CD4-positive, alpha-beta memory T cell (primary cell): ENCODE measurements at regions of chr13 and their contacts with region 1.

Region 1: GRCh38 chr13:102773441-102774215 is at the start of gene TEX30:
- DNase-seq: peak; percentile 85 to 93 (median 90)
- H3K4me3 ChIP-seq: peak within 1 kb of the TSS; percentile 50 to 81
- H3K4me3 Mint-ChIP-seq: peak within 1 kb of the TSS; percentile 90 to 94 (median 92)
- H3K27ac ChIP-seq: peak within 1 kb of the TSS; percentile 84
- H3K27ac Mint-ChIP-seq: peak within 1 kb of the TSS; percentile 88 to 97 (median 96)
- H3K4me1 ChIP-seq: peaks cover 23% of the 10 kb centered on the region
- H3K4me1 Mint-ChIP-seq: peaks cover 15 to 57% (median 42%) of the 10 kb centered on the region in 4 donors
- H3K27me3 ChIP-seq: no peaks in the 10 kb centered on the region
- H3K27me3 Mint-ChIP-seq: no peaks in the 10 kb centered on the region
- total RNA-seq, gene TEX30: 9.2 to 9.3 TPM

Region 2: GRCh38 chr13:102394158-102395053 is 379.2 kb before region 1 on chr13:
- CTCF ChIA-PET with region 1: no interaction called
- POLR2A ChIA-PET with region 1: interaction called, 3 read pairs
- intact Hi-C with region 1: loop called (anchors 1 kb)
- DNase-seq: peak; percentile 93 to 95 (median 94)
- H3K4me3 ChIP-seq: peak overlapping the region; percentile 61 to 93
- H3K4me3 Mint-ChIP-seq: peak overlapping the region; percentile 88 to 94 (median 90)
- H3K27ac ChIP-seq: peak overlapping the region; percentile 59
- H3K27ac Mint-ChIP-seq: peak overlapping the region; percentile 86 to 95 (median 92)
- H3K4me1 ChIP-seq: peaks cover 12% of the 10 kb centered on the region
- H3K4me1 Mint-ChIP-seq: peaks cover 7 to 19% (median 13%) of the 10 kb centered on the region in 4 donors
- H3K27me3 ChIP-seq: peaks cover 9% of the 10 kb centered on the region
- H3K27me3 Mint-ChIP-seq: peaks cover 7% of the 10 kb centered on the region in 2 donors

Region 3: GRCh38 chr13:102680842-102681740 is 92.5 kb before region 1 on chr13:
- CTCF ChIA-PET with region 1: no interaction called
- POLR2A ChIA-PET with region 1: interaction called, 4 read pairs
- intact Hi-C with region 1: loop called (anchors 2 kb)
- DNase-seq: peak in 3 of 5 donors; percentile 7 to 36 (median 13)
- H3K4me3 ChIP-seq: no peak overlapping the region
- H3K4me3 Mint-ChIP-seq: no peak overlapping the region
- H3K27ac ChIP-seq: no peak overlapping the region
- H3K27ac Mint-ChIP-seq: peak overlapping the region; percentile 1 to 82 (median 71)
- H3K4me1 ChIP-seq: peaks cover 16% of the 10 kb centered on the region
- H3K4me1 Mint-ChIP-seq: peaks cover 14 to 16% (median 15%) of the 10 kb centered on the region in 4 donors
- H3K27me3 ChIP-seq: no peaks in the 10 kb centered on the region
- H3K27me3 Mint-ChIP-seq: no peaks in the 10 kb centered on the region

Region 4: GRCh38 chr13:102800145-102801041 is 26.8 kb after region 1 on chr13:
- CTCF ChIA-PET with region 1: interaction called, 14 read pairs
- POLR2A ChIA-PET with region 1: interaction called, 19 read pairs
- intact Hi-C with region 1: loop called (anchors 1 kb)
- DNase-seq: peak; percentile 75 to 83 (median 81)
- H3K4me3 ChIP-seq: peak overlapping the region; percentile 69 to 76
- H3K4me3 Mint-ChIP-seq: peak overlapping the region; percentile 87 to 95 (median 90)
- H3K27ac ChIP-seq: peak overlapping the region; percentile 46
- H3K27ac Mint-ChIP-seq: peak overlapping the region in 6 of 7 donors; percentile 43 to 86 (median 69)
- H3K4me1 ChIP-seq: peaks cover 18% of the 10 kb centered on the region
- H3K4me1 Mint-ChIP-seq: peaks cover 18 to 32% (median 21%) of the 10 kb centered on the region in 4 donors
- H3K27me3 ChIP-seq: no peaks in the 10 kb centered on the region
- H3K27me3 Mint-ChIP-seq: peaks cover 1 to 6% of the 10 kb centered on the region in 2 donors

Region 5: GRCh38 chr13:102845630-102846260 is 72.1 kb after region 1 on chr13 and contains the start of gene ERCC5:
- CTCF ChIA-PET with region 1: interaction called, 4 read pairs
- POLR2A ChIA-PET with region 1: interaction called, 60 read pairs
- intact Hi-C with region 1: loop called (anchors 1 kb)
- DNase-seq: peak; percentile 95 to 98 (median 97)
- H3K4me3 ChIP-seq: peak within 1 kb of the TSS; percentile 88 to 92
- H3K4me3 Mint-ChIP-seq: peak within 1 kb of the TSS; percentile 97 to 99 (median 98)
- H3K27ac ChIP-seq: peak within 1 kb of the TSS; percentile 96
- H3K27ac Mint-ChIP-seq: peak within 1 kb of the TSS; percentile 98 to 100 (median 99)
- H3K4me1 ChIP-seq: peaks cover 46% of the 10 kb centered on the region
- H3K4me1 Mint-ChIP-seq: peaks cover 27 to 55% (median 37%) of the 10 kb centered on the region in 4 donors
- H3K27me3 ChIP-seq: no peaks in the 10 kb centered on the region
- H3K27me3 Mint-ChIP-seq: no peaks in the 10 kb centered on the region
- total RNA-seq, gene ERCC5: 134 to 136 TPM

Region 6: DNA sequence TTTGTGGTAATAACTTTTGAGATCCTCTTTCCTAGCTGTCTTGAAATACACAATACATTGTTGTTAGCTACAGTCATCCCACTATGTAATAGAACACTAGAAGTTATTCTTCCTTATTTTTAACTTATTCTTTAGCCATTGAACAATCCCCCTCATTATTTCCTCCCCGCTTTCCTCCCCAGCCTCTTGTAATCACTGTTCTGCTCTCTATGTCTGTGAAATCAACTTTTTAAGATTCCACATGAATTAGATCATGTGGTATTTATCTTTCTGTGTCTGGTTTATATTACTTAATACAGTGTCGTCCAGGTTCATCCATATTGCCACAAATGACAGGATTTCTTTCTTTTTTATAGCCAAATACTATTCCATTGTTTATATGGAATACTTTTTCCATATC is 219.7 kb after region 1 on chr13:
- CTCF ChIA-PET with region 1: no interaction called
- POLR2A ChIA-PET with region 1: no interaction called
- intact Hi-C with region 1: no loop called
- DNase-seq: no peak
- H3K4me3 ChIP-seq: no peak overlapping the region
- H3K4me3 Mint-ChIP-seq: no peak overlapping the region
- H3K27ac ChIP-seq: no peak overlapping the region
- H3K27ac Mint-ChIP-seq: no peak overlapping the region
- H3K4me1 ChIP-seq: no peaks in the 10 kb centered on the region
- H3K4me1 Mint-ChIP-seq: no peaks in the 10 kb centered on the region
- H3K27me3 ChIP-seq: no peaks in the 10 kb centered on the region
- H3K27me3 Mint-ChIP-seq: peaks cover 2 to 3% of the 10 kb centered on the region in 2 donors